CD8-positive, alpha-beta T cell (primary cell): ENCODE measurements at regions of chr2 and their contacts with region 1.

Region 1: GRCh38 chr2:232789082-232789481 is 12.7 kb upstream of the KCNJ13 start:
- DNase-seq: no peak
- ATAC-seq: no peak
- H3K4me3 ChIP-seq: no peak overlapping the region
- H3K4me3 Mint-ChIP-seq: no peak overlapping the region
- H3K27ac ChIP-seq: no peak overlapping the region
- H3K27ac Mint-ChIP-seq: no peak overlapping the region
- H3K4me1 ChIP-seq: no peaks in the 10 kb centered on the region
- H3K4me1 Mint-ChIP-seq: no peaks in the 10 kb centered on the region
- H3K27me3 ChIP-seq: no peaks in the 10 kb centered on the region
- H3K27me3 Mint-ChIP-seq: no peaks in the 10 kb centered on the region
- CTCF ChIP-seq: no peak

Region 2: DNA sequence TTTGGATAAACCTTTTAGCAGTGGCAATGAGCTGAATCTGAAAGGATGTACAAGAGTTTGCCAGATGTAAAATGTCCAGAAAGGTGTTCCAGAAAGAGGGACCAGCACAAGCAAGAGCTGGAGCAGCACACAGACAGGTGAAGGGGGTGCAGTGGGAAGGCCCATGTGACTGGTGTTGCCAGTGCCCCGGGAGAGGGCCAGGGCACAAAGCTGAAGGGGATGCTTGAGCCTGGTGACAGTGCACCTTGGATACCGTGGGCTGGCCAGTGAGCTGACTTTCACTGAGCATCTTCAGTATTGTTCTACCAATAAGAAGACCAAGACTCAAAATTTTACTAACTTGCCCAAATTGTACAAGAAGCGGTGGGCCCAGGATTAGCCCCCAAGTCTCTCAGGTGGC is 542.8 kb before region 1 on chr2:
- CTCF ChIA-PET with region 1: no interaction called
- POLR2A ChIA-PET with region 1: no interaction called
- intact Hi-C with region 1: loop called in 1 of 2 experiments (anchors 5 kb)
- DNase-seq: peak in 1 of 9 experiments; percentile 23
- ATAC-seq: no peak
- H3K4me3 ChIP-seq: no peak overlapping the region
- H3K4me3 Mint-ChIP-seq: no peak overlapping the region
- H3K27ac ChIP-seq: no peak overlapping the region
- H3K27ac Mint-ChIP-seq: no peak overlapping the region
- H3K4me1 ChIP-seq: no peaks in the 10 kb centered on the region
- H3K4me1 Mint-ChIP-seq: no peaks in the 10 kb centered on the region
- H3K27me3 ChIP-seq: no peaks in the 10 kb centered on the region
- H3K27me3 Mint-ChIP-seq: no peaks in the 10 kb centered on the region
- CTCF ChIP-seq: no peak

Region 3: GRCh38 chr2:232365621-232366321 is 423.3 kb before region 1 on chr2:
- CTCF ChIA-PET with region 1: no interaction called
- POLR2A ChIA-PET with region 1: no interaction called
- intact Hi-C with region 1: no loop called
- DNase-seq: no peak
- ATAC-seq: peak; percentile 53
- H3K4me3 ChIP-seq: no peak overlapping the region
- H3K4me3 Mint-ChIP-seq: peak overlapping the region; percentile 15
- H3K27ac ChIP-seq: no peak overlapping the region
- H3K27ac Mint-ChIP-seq: no peak overlapping the region
- H3K4me1 ChIP-seq: peaks cover 30% of the 10 kb centered on the region
- H3K4me1 Mint-ChIP-seq: peaks cover 33% of the 10 kb centered on the region
- H3K27me3 ChIP-seq: no peaks in the 10 kb centered on the region
- H3K27me3 Mint-ChIP-seq: no peaks in the 10 kb centered on the region
- CTCF ChIP-seq: no peak

Region 4: DNA sequence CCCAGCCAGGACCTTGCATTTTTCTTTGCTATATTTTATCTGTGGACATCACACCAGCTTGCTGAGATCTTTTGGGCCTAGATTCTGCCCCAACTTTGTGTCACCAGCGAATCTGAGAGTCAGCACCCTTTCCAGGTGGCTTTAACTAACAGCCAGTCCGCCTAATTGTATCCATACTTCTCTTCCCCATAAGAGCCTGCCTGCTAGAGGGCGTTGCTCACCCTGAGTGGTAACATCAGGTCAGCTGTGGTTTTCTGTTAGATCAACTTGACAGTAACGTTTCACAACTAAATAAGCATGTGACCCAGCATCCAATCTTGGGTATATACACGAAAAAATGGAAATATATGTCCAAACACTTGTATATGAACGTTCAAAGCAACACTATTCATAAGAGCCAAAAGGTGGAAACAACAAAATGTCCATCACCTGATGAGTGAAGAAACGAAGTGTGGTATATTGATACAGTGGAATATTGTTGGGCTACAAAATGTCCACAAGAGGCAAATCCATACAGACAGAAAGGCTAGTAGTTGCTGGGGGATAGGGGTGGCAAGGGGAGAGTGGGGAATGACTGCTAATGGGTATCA is 130.8 kb before region 1 on chr2:
- CTCF ChIA-PET with region 1: no interaction called
- POLR2A ChIA-PET with region 1: no interaction called
- intact Hi-C with region 1: no loop called
- DNase-seq: no peak
- ATAC-seq: no peak
- H3K4me3 ChIP-seq: no peak overlapping the region
- H3K4me3 Mint-ChIP-seq: no peak overlapping the region
- H3K27ac ChIP-seq: no peak overlapping the region
- H3K27ac Mint-ChIP-seq: no peak overlapping the region
- H3K4me1 ChIP-seq: no peaks in the 10 kb centered on the region
- H3K4me1 Mint-ChIP-seq: no peaks in the 10 kb centered on the region
- H3K27me3 ChIP-seq: no peaks in the 10 kb centered on the region
- H3K27me3 Mint-ChIP-seq: no peaks in the 10 kb centered on the region
- CTCF ChIP-seq: no peak

Region 5: DNA sequence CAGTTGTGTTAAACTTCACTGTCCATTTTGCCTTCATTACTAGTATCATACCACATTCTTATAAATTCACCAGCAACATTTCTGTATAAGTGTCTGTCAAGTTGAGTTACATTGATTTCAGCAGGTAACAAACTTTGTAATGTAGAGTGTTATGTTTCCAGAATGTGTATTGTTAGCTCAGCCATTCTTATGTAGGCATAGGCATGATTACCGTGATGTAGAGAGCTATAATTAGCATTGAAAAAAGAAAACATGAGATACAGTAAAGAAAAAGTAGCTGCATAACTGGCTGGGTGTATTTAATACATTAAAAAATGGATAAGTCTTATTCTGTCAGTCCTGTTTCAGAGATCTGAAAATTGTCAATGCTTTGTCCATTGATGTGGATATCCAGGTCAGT is 21.2 kb before region 1 on chr2:
- CTCF ChIA-PET with region 1: no interaction called
- POLR2A ChIA-PET with region 1: interaction called, 3 read pairs
- intact Hi-C with region 1: loop called in 1 of 2 experiments (anchors 2 kb)
- DNase-seq: no peak
- ATAC-seq: no peak
- H3K4me3 ChIP-seq: no peak overlapping the region
- H3K4me3 Mint-ChIP-seq: no peak overlapping the region
- H3K27ac ChIP-seq: no peak overlapping the region
- H3K27ac Mint-ChIP-seq: no peak overlapping the region
- H3K4me1 ChIP-seq: peaks cover 12% of the 10 kb centered on the region
- H3K4me1 Mint-ChIP-seq: peaks cover 22% of the 10 kb centered on the region
- H3K27me3 ChIP-seq: no peaks in the 10 kb centered on the region
- H3K27me3 Mint-ChIP-seq: no peaks in the 10 kb centered on the region
- CTCF ChIP-seq: no peak

Region 6: DNA sequence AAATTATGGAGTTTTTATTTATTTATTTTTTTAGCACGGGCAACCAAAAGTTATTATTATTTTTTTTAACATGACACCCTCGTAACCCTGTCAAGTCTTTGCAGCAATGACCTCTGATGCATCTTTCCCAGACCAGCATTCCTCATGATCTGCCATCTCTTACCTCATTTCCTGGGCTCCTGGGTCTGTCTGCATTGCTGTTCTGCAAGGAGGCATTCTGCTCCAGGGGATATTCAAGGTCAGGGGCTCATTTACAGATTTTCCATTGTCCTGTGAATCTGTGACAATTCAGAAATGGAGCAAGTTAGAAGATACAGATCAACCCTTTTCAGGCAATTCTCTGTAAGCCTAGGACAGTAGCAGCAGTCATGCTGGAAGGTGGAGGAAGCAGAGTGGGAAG is 181.0 kb after region 1 on chr2:
- CTCF ChIA-PET with region 1: no interaction called
- POLR2A ChIA-PET with region 1: no interaction called
- intact Hi-C with region 1: no loop called
- DNase-seq: peak in 1 of 9 experiments; percentile 2
- ATAC-seq: no peak
- H3K4me3 ChIP-seq: no peak overlapping the region
- H3K4me3 Mint-ChIP-seq: no peak overlapping the region
- H3K27ac ChIP-seq: no peak overlapping the region
- H3K27ac Mint-ChIP-seq: no peak overlapping the region
- H3K4me1 ChIP-seq: no peaks in the 10 kb centered on the region
- H3K4me1 Mint-ChIP-seq: no peaks in the 10 kb centered on the region
- H3K27me3 ChIP-seq: no peaks in the 10 kb centered on the region
- H3K27me3 Mint-ChIP-seq: peaks cover 3% of the 10 kb centered on the region
- CTCF ChIP-seq: no peak